Activated T-helper 1 cell treated with anti-CD3 and anti-CD28 coated beads, Interleukin-12 subunit alpha, Interleukin-12 subunit beta, Interleukin-2, Interleukin-4 antibody, amounts not matched to agents 30 ng/mL and 10 ng/mL and 1 ng/mL, durations not matched to agents 14 hours and 24 hours and 36 hours (primary cell): ENCODE measurements at regions of chr10 and their contacts with region 1.

Region 1: GRCh38 chr10:63866075-63866746 is 345.0 kb downstream of the REEP3 start:
- DNase-seq: peak; percentile 6
- H3K4me3 Mint-ChIP-seq: no peak overlapping the region
- H3K27ac Mint-ChIP-seq: no peak overlapping the region
- H3K4me1 Mint-ChIP-seq: peaks cover 12% of the 10 kb centered on the region
- H3K27me3 Mint-ChIP-seq: peaks cover 12% of the 10 kb centered on the region

Region 2: DNA sequence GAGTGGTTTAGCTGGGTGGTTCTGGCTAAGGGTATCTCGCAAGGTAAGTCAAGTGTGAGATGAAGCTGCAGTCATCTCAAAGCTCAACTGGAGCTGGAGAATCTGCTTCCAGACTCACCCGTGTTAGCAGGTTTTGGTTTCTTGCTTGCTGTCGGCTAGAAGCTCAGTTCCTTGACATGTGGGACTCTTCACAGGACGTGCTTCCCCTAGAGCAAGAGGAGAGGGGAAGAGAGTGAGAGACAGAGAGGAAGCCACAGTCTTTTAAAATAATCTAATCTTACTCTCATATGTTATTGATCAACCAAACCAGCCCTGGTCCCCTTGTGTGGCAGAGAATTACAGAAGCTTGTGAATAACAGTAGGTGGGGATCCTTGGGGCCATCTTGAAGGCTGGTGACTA is 145.5 kb before region 1 on chr10:
- intact Hi-C with region 1: no loop called
- DNase-seq: no peak
- H3K4me3 Mint-ChIP-seq: no peak overlapping the region
- H3K27ac Mint-ChIP-seq: no peak overlapping the region
- H3K4me1 Mint-ChIP-seq: peaks cover 34% of the 10 kb centered on the region
- H3K27me3 Mint-ChIP-seq: peaks cover 7% of the 10 kb centered on the region

Region 3: GRCh38 chr10:64041185-64041988 is 175.2 kb after region 1 on chr10:
- intact Hi-C with region 1: loop called (anchors 1 kb)
- DNase-seq: peak; percentile 75
- H3K4me3 Mint-ChIP-seq: peak overlapping the region; percentile 58
- H3K27ac Mint-ChIP-seq: no peak overlapping the region
- H3K4me1 Mint-ChIP-seq: peaks cover 6% of the 10 kb centered on the region
- H3K27me3 Mint-ChIP-seq: peaks cover 2% of the 10 kb centered on the region